CD8-positive, alpha-beta T cell (primary cell): ENCODE measurements at regions of chr11 and their contacts with region 1.

Region 1: GRCh38 chr11:33015621-33016551 is at the start of gene DEPDC7:
- DNase-seq: peak; percentile 49 to 87 (median 80)
- ATAC-seq: peak; percentile 75
- H3K4me3 ChIP-seq: peak within 1 kb of the TSS; percentile 56 to 62
- H3K4me3 Mint-ChIP-seq: peak within 1 kb of the TSS; percentile 89
- H3K27ac ChIP-seq: no peak within 1 kb of the TSS
- H3K27ac Mint-ChIP-seq: peak within 1 kb of the TSS; percentile 73
- H3K4me1 ChIP-seq: peaks cover 26% of the 10 kb centered on the region
- H3K4me1 Mint-ChIP-seq: peaks cover 51% of the 10 kb centered on the region
- H3K27me3 ChIP-seq: peaks cover 0 to 2% of the 10 kb centered on the region in 2 experiments
- H3K27me3 Mint-ChIP-seq: peaks cover 12% of the 10 kb centered on the region
- CTCF ChIP-seq: no peak
- total RNA-seq, gene DEPDC7: 2.9 to 3.2 TPM

Region 2: GRCh38 chr11:32960553-32961164 is 55.2 kb before region 1 on chr11:
- CTCF ChIA-PET with region 1: interaction called, 4 read pairs
- POLR2A ChIA-PET with region 1: no interaction called
- intact Hi-C with region 1: loop called in 1 of 2 experiments (anchors 5 kb)
- DNase-seq: peak in 2 of 9 experiments; percentile 62 to 69
- ATAC-seq: peak; percentile 46
- H3K4me3 ChIP-seq: no peak overlapping the region
- H3K4me3 Mint-ChIP-seq: no peak overlapping the region
- H3K27ac ChIP-seq: no peak overlapping the region
- H3K27ac Mint-ChIP-seq: no peak overlapping the region
- H3K4me1 ChIP-seq: no peaks in the 10 kb centered on the region
- H3K4me1 Mint-ChIP-seq: no peaks in the 10 kb centered on the region
- H3K27me3 ChIP-seq: no peaks in the 10 kb centered on the region
- H3K27me3 Mint-ChIP-seq: no peaks in the 10 kb centered on the region
- CTCF ChIP-seq: peak; percentile 78

Region 3: DNA sequence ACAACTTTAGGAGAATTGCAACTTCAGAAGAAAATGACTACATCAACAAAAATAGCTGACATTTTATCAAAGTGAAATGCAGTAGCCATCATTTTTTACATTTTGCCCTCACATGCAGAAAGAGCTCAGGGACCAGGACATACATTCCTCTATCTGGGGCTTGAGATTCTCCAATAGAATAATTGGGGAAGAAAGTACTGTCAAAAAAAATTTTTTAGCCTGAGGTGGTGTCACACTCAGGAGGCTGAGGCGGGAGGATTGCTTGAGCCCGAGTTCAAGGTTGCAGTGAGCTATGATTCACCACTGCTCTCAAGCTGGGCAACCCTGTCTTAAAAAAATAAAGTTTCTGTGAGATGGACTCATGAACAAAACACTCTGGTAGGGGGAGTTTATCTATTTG is 32.4 kb before region 1 on chr11:
- CTCF ChIA-PET with region 1: no interaction called
- POLR2A ChIA-PET with region 1: no interaction called
- intact Hi-C with region 1: loop called in 1 of 2 experiments (anchors 5 kb)
- DNase-seq: no peak
- ATAC-seq: no peak
- H3K4me3 ChIP-seq: no peak overlapping the region
- H3K4me3 Mint-ChIP-seq: no peak overlapping the region
- H3K27ac ChIP-seq: no peak overlapping the region
- H3K27ac Mint-ChIP-seq: no peak overlapping the region
- H3K4me1 ChIP-seq: no peaks in the 10 kb centered on the region
- H3K4me1 Mint-ChIP-seq: no peaks in the 10 kb centered on the region
- H3K27me3 ChIP-seq: no peaks in the 10 kb centered on the region
- H3K27me3 Mint-ChIP-seq: no peaks in the 10 kb centered on the region
- CTCF ChIP-seq: no peak

Region 4: GRCh38 chr11:33039274-33040032 is 23.6 kb after region 1 on chr11 and contains the start of gene TCP11L1:
- CTCF ChIA-PET with region 1: interaction called, 5 read pairs
- POLR2A ChIA-PET with region 1: interaction called, 23 read pairs
- intact Hi-C with region 1: loop called (anchors 1 to 2 kb)
- DNase-seq: peak; percentile 60 to 89 (median 83)
- ATAC-seq: peak; percentile 81
- H3K4me3 ChIP-seq: peak within 1 kb of the TSS; percentile 98
- H3K4me3 Mint-ChIP-seq: peak within 1 kb of the TSS; percentile 95
- H3K27ac ChIP-seq: peak within 1 kb of the TSS; percentile 71 to 86
- H3K27ac Mint-ChIP-seq: peak within 1 kb of the TSS; percentile 91
- H3K4me1 ChIP-seq: peaks cover 10% of the 10 kb centered on the region
- H3K4me1 Mint-ChIP-seq: peaks cover 20% of the 10 kb centered on the region
- H3K27me3 ChIP-seq: no peaks in the 10 kb centered on the region
- H3K27me3 Mint-ChIP-seq: no peaks in the 10 kb centered on the region
- CTCF ChIP-seq: no peak
- total RNA-seq, gene TCP11L1: 10.9 to 12.3 TPM

Region 5: GRCh38 chr11:33052231-33052630 is 36.3 kb after region 1 on chr11:
- CTCF ChIA-PET with region 1: no interaction called
- POLR2A ChIA-PET with region 1: no interaction called
- intact Hi-C with region 1: loop called in 1 of 2 experiments (anchors 5 kb)
- DNase-seq: no peak
- ATAC-seq: no peak
- H3K4me3 ChIP-seq: no peak overlapping the region
- H3K4me3 Mint-ChIP-seq: no peak overlapping the region
- H3K27ac ChIP-seq: no peak overlapping the region
- H3K27ac Mint-ChIP-seq: no peak overlapping the region
- H3K4me1 ChIP-seq: no peaks in the 10 kb centered on the region
- H3K4me1 Mint-ChIP-seq: no peaks in the 10 kb centered on the region
- H3K27me3 ChIP-seq: no peaks in the 10 kb centered on the region
- H3K27me3 Mint-ChIP-seq: no peaks in the 10 kb centered on the region
- CTCF ChIP-seq: no peak